Mammary epithelial cell (primary cell): ENCODE measurements at regions of chr3 and their contacts with region 1.

Region 1: GRCh38 chr3:173045770-173046382 is 95.2 kb downstream of the SPATA16 start:
- DNase-seq: no peak
- H3K4me3 ChIP-seq: no peak overlapping the region
- H3K27ac ChIP-seq: no peak overlapping the region
- H3K4me1 ChIP-seq: no peaks in the 10 kb centered on the region
- H3K27me3 ChIP-seq: no peaks in the 10 kb centered on the region
- CTCF ChIP-seq: peak; percentile 19 to 29

Region 2: DNA sequence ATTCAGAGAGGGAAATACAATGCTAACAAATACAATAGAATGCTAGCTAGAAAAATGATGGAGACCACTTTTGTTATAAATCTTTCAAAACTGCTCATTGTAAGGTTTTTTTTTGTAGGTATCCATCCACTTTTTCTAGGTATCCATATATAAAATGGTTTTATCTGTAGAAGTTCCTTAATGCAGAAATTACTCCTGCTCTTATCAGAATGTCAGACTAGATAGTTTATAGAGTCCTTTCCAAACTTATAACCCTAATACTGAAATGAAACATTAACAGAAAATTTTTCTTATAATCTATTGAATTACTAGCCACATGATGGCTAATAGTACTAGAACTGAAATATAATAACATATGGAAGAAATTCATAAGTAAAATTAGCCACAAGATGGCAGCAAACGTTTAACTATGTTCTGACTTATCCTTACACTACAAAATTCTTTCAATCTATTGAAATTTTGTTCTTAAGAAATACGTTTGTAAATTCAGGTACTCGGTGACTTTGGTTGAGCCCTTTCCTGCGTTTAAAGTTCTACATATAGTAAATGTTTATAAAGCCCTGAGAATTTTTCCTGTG is 236.8 kb before region 1 on chr3:
- CTCF ChIA-PET with region 1: no interaction called
- dilution Hi-C with region 1: no loop called
- in situ Hi-C with region 1: no loop called
- intact Hi-C with region 1: loop called (anchors 1 kb)
- DNase-seq: peak; percentile 19
- H3K4me3 ChIP-seq: no peak overlapping the region
- H3K27ac ChIP-seq: no peak overlapping the region
- H3K4me1 ChIP-seq: no peaks in the 10 kb centered on the region
- H3K27me3 ChIP-seq: no peaks in the 10 kb centered on the region
- CTCF ChIP-seq: peak; percentile 25 to 40

Region 3: GRCh38 chr3:172836390-172836997 is 209.4 kb before region 1 on chr3:
- CTCF ChIA-PET with region 1: no interaction called
- dilution Hi-C with region 1: no loop called
- in situ Hi-C with region 1: loop called (anchors 25 kb)
- intact Hi-C with region 1: loop called (anchors 1 kb)
- DNase-seq: peak; percentile 27
- H3K4me3 ChIP-seq: no peak overlapping the region
- H3K27ac ChIP-seq: no peak overlapping the region
- H3K4me1 ChIP-seq: no peaks in the 10 kb centered on the region
- H3K27me3 ChIP-seq: peaks cover 9% of the 10 kb centered on the region
- CTCF ChIP-seq: peak; percentile 70 to 71

Region 4: GRCh38 chr3:173096140-173096539 is 50.3 kb after region 1 on chr3:
- CTCF ChIA-PET with region 1: no interaction called
- dilution Hi-C with region 1: no loop called
- in situ Hi-C with region 1: no loop called
- intact Hi-C with region 1: no loop called
- DNase-seq: no peak
- H3K4me3 ChIP-seq: no peak overlapping the region
- H3K27ac ChIP-seq: no peak overlapping the region
- H3K4me1 ChIP-seq: no peaks in the 10 kb centered on the region
- H3K27me3 ChIP-seq: no peaks in the 10 kb centered on the region
- CTCF ChIP-seq: no peak

Region 5: GRCh38 chr3:173416070-173416469 is 370.2 kb after region 1 on chr3:
- CTCF ChIA-PET with region 1: no interaction called
- dilution Hi-C with region 1: no loop called
- in situ Hi-C with region 1: no loop called
- intact Hi-C with region 1: no loop called
- DNase-seq: no peak
- H3K4me3 ChIP-seq: no peak overlapping the region
- H3K27ac ChIP-seq: no peak overlapping the region
- H3K4me1 ChIP-seq: no peaks in the 10 kb centered on the region
- H3K27me3 ChIP-seq: no peaks in the 10 kb centered on the region
- CTCF ChIP-seq: no peak